Transverse colon (tissue), 4 donors: ENCODE measurements at regions of chr4 and their contacts with region 1.

Region 1: DNA sequence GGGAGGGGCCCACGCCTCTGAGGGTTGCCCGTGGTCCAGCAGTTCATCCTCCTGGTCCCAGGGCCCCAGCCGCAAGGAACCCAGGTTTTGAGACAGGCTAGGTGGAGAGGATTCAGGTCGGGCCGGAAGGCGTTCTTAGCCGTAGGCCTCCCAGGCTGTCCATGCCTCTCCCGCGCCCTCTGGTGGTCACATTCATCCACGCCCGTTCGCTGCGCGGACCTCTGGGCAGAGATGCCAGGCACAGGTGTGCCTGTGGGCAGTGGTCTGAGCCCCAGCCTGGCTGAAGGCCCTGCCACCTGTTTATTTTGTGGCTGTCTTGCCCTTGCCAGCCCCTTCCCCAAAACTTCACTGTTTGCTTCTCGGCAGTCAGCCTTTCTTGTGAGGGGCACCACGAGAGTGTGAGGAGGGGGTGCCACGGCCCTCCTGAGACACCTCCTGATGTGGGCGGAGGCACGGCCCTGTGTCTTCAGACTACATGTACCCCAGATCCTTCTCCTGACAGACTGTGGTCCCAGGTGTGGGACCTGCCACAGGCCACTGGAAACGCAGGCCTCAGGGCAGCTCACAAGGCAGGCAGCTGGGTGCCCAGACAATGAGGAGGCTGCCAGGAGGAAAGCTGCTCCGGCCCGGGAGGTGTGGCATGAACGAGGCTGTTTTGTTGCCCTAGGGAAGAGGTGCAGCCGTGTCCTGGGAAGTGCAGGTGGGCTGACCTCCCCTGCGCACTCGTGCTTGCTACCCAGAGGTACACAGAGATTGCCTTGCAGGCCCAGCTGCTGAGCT is 5.0 kb downstream of the UVSSA start:
- DNase-seq: peak; percentile 93
- H3K4me3 ChIP-seq: no peak overlapping the region
- H3K27ac ChIP-seq: peak overlapping the region in 2 of 4 donors; percentile 30 to 42
- H3K4me1 ChIP-seq: peaks cover 10 to 18% (median 15%) of the 10 kb centered on the region in 4 donors
- H3K27me3 ChIP-seq: no peaks in the 10 kb centered on the region
- CTCF ChIP-seq: peak; percentile 91 to 95 (median 94)
- EP300 ChIP-seq: no peak
- POLR2A ChIP-seq: no peak

Region 2: GRCh38 chr4:1130316-1131186 is 221.5 kb before region 1 on chr4:
- in situ Hi-C with region 1: loop called in 1 of 4 experiments (anchors 10 kb)
- intact Hi-C with region 1: loop called (anchors 5 kb)
- DNase-seq: peak; percentile 70
- H3K4me3 ChIP-seq: no peak overlapping the region
- H3K27ac ChIP-seq: no peak overlapping the region
- H3K4me1 ChIP-seq: no peaks in the 10 kb centered on the region
- H3K27me3 ChIP-seq: no peaks in the 10 kb centered on the region
- CTCF ChIP-seq: peak; percentile 96 to 100 (median 98)
- EP300 ChIP-seq: no peak
- POLR2A ChIP-seq: no peak

Region 3: GRCh38 chr4:1218634-1219565 is 133.1 kb before region 1 on chr4:
- in situ Hi-C with region 1: no loop called
- intact Hi-C with region 1: no loop called
- DNase-seq: peak; percentile 40
- H3K4me3 ChIP-seq: no peak overlapping the region
- H3K27ac ChIP-seq: peak overlapping the region in 3 of 4 donors; percentile 28 to 57 (median 40)
- H3K4me1 ChIP-seq: peaks cover 0 to 9% (median 5%) of the 10 kb centered on the region in 4 donors
- H3K27me3 ChIP-seq: no peaks in the 10 kb centered on the region
- CTCF ChIP-seq: no peak
- EP300 ChIP-seq: no peak
- POLR2A ChIP-seq: no peak

Region 4: DNA sequence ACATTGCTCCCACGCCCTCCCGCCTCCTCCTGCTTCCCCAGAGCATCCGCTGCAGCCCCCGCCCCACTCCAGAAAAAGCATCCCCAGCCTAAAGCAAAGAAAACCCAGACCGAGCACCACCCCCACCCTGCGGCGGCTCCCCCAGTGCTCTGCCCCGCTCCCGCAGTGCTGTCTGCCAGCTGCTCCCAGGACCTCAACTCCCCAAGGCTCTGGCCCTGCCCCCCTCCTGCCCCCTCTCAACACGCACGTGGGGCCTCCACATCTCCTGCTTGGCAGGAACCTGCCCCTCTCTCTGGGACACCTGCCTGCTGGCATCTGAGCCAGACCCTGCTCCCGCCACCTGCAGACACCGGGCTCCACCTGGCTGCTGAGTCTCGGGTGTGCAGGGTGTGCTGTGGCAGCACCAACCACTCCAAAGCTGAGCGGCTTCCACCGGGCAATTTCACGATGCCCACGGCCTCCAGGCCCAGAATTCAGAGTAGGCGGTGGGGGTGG is 252.7 kb after region 1 on chr4:
- in situ Hi-C with region 1: loop called in 2 of 4 experiments (anchors 25 kb)
- intact Hi-C with region 1: no loop called
- DNase-seq: peak; percentile 22
- H3K4me3 ChIP-seq: no peak overlapping the region
- H3K27ac ChIP-seq: no peak overlapping the region
- H3K4me1 ChIP-seq: no peaks in the 10 kb centered on the region
- H3K27me3 ChIP-seq: peaks cover 32% of the 10 kb centered on the region
- CTCF ChIP-seq: peak in 1 of 5 experiments; percentile 20
- EP300 ChIP-seq: no peak
- POLR2A ChIP-seq: no peak

Region 5: DNA sequence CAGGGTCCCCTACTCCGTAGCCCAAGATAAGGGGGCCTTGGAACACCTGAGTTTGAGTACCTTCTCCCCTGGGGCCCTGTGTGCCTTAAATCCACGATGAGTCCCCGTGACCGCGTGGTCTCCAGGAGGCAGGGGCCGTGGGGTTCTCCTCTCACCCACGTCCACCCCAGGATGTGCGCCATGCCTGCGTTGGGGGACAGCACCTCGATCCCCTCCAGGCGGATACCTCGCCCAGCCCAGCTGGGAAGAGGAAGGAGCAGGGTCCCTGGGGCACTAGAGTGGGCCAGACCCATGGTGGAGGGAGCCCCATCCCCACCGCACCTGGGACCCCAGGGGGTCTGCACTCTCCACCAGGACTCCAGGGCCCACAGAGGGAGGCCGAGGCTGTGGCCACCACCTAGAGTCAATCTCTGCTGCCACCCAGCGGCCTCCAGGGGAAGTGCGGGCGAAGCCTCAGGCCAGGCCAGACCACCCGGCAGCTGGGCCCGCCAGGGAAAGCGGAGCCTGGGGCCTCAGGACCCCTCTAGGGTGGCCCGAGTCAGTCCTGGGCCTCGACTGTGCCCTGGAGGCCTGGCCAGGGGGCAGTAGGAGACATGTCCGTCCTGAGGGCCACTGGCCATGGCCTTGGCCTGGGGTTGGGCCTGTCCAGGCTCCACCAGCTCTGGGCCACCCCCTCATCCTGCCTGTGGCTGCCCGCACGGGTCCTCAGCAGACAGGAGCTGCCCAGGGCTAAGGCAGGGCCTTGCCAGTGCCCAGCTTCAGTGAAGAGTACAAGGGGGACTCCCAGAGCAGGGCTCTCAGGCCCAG is 277.1 kb after region 1 on chr4:
- in situ Hi-C with region 1: loop called in 3 of 4 experiments (anchors 25 kb)
- intact Hi-C with region 1: loop called (anchors 5 kb)
- DNase-seq: peak; percentile 65
- H3K4me3 ChIP-seq: no peak overlapping the region
- H3K27ac ChIP-seq: no peak overlapping the region
- H3K4me1 ChIP-seq: no peaks in the 10 kb centered on the region
- H3K27me3 ChIP-seq: peaks cover 4% of the 10 kb centered on the region
- CTCF ChIP-seq: peak; percentile 90 to 99 (median 98)
- EP300 ChIP-seq: no peak
- POLR2A ChIP-seq: no peak